ENCODE measurements at regions of chr15 and their contacts with region 1.

Region 1: GRCh38 chr15:65862682-65863081 is 6.6 kb upstream of the RAB11A start:
- DNase-seq: peak; percentile 77
- ATAC-seq: peak; percentile 99
- H3K4me3 Mint-ChIP-seq: no peak overlapping the region
- H3K27ac Mint-ChIP-seq: no peak overlapping the region
- H3K4me1 Mint-ChIP-seq: peaks cover 23% of the 10 kb centered on the region
- H3K27me3 Mint-ChIP-seq: no peaks in the 10 kb centered on the region
- CTCF ChIP-seq: 0 out of 2 replicates have a peak, but pooled peaks have one; percentile 16

Region 2: GRCh38 chr15:65638681-65639089 is 224.0 kb before region 1 on chr15:
- CTCF ChIA-PET with region 1: interaction called, 13 read pairs
- POLR2A ChIA-PET with region 1: no interaction called
- DNase-seq: no peak
- ATAC-seq: peak; percentile 74
- H3K4me3 Mint-ChIP-seq: no peak overlapping the region; the same call in 1 of the 2 replicates
- H3K27ac Mint-ChIP-seq: no peak overlapping the region
- H3K4me1 Mint-ChIP-seq: peaks cover 11% of the 10 kb centered on the region
- H3K27me3 Mint-ChIP-seq: no peaks in the 10 kb centered on the region
- CTCF ChIP-seq: peak; percentile 67